ENCODE measurements at regions of chr9 and their contacts with region 1.

Region 1: GRCh38 chr9:22244141-22245011 is 202.2 kb upstream of the DMRTA1 start:
- DNase-seq: peak; percentile 55
- H3K4me3 Mint-ChIP-seq: no peak overlapping the region
- H3K27ac Mint-ChIP-seq: no peak overlapping the region
- H3K4me1 Mint-ChIP-seq: peaks cover 23% of the 10 kb centered on the region
- H3K27me3 Mint-ChIP-seq: no peaks in the 10 kb centered on the region
- CTCF ChIP-seq: peak; percentile 30

Region 2: GRCh38 chr9:21252721-21253547 is 991.4 kb before region 1 on chr9:
- CTCF ChIA-PET with region 1: interaction called, 5 read pairs
- POLR2A ChIA-PET with region 1: no interaction called
- intact Hi-C with region 1: loop called (anchors 10 kb)
- DNase-seq: peak; percentile 23
- H3K4me3 Mint-ChIP-seq: no peak overlapping the region
- H3K27ac Mint-ChIP-seq: no peak overlapping the region
- H3K4me1 Mint-ChIP-seq: peaks cover 6% of the 10 kb centered on the region
- H3K27me3 Mint-ChIP-seq: peaks cover 87% of the 10 kb centered on the region
- CTCF ChIP-seq: peak; percentile 25

Region 3: GRCh38 chr9:21434202-21435014 is 810.0 kb before region 1 on chr9:
- CTCF ChIA-PET with region 1: interaction called, 8 read pairs
- POLR2A ChIA-PET with region 1: no interaction called
- intact Hi-C with region 1: loop called (anchors 1 kb)
- DNase-seq: peak; percentile 53
- H3K4me3 Mint-ChIP-seq: no peak overlapping the region
- H3K27ac Mint-ChIP-seq: no peak overlapping the region
- H3K4me1 Mint-ChIP-seq: no peaks in the 10 kb centered on the region
- H3K27me3 Mint-ChIP-seq: no peaks in the 10 kb centered on the region
- CTCF ChIP-seq: peak; percentile 46

Region 4: GRCh38 chr9:21491742-21492141 is 752.6 kb before region 1 on chr9:
- CTCF ChIA-PET with region 1: interaction called, 13 read pairs
- POLR2A ChIA-PET with region 1: no interaction called
- intact Hi-C with region 1: loop called (anchors 10 kb)
- DNase-seq: no peak
- H3K4me3 Mint-ChIP-seq: no peak overlapping the region
- H3K27ac Mint-ChIP-seq: no peak overlapping the region
- H3K4me1 Mint-ChIP-seq: peaks cover 7% of the 10 kb centered on the region
- H3K27me3 Mint-ChIP-seq: no peaks in the 10 kb centered on the region
- CTCF ChIP-seq: no peak

Region 5: GRCh38 chr9:21744841-21745240 is 499.5 kb before region 1 on chr9:
- CTCF ChIA-PET with region 1: no interaction called
- POLR2A ChIA-PET with region 1: no interaction called
- intact Hi-C with region 1: no loop called
- DNase-seq: no peak
- H3K4me3 Mint-ChIP-seq: no peak overlapping the region
- H3K27ac Mint-ChIP-seq: no peak overlapping the region
- H3K4me1 Mint-ChIP-seq: no peaks in the 10 kb centered on the region
- H3K27me3 Mint-ChIP-seq: no peaks in the 10 kb centered on the region
- CTCF ChIP-seq: no peak

Region 6: GRCh38 chr9:21837501-21837900 is 406.9 kb before region 1 on chr9:
- CTCF ChIA-PET with region 1: interaction called, 11 read pairs
- POLR2A ChIA-PET with region 1: no interaction called
- intact Hi-C with region 1: no loop called
- DNase-seq: no peak
- H3K4me3 Mint-ChIP-seq: no peak overlapping the region
- H3K27ac Mint-ChIP-seq: peak overlapping the region; percentile 73
- H3K4me1 Mint-ChIP-seq: peaks cover 25% of the 10 kb centered on the region
- H3K27me3 Mint-ChIP-seq: no peaks in the 10 kb centered on the region
- CTCF ChIP-seq: no peak

Region 7: GRCh38 chr9:22265038-22265437 is 20.7 kb after region 1 on chr9:
- CTCF ChIA-PET with region 1: no interaction called
- POLR2A ChIA-PET with region 1: no interaction called
- intact Hi-C with region 1: no loop called
- DNase-seq: no peak
- H3K4me3 Mint-ChIP-seq: no peak overlapping the region
- H3K27ac Mint-ChIP-seq: no peak overlapping the region
- H3K4me1 Mint-ChIP-seq: no peaks in the 10 kb centered on the region
- H3K27me3 Mint-ChIP-seq: no peaks in the 10 kb centered on the region
- CTCF ChIP-seq: no peak